Heart right ventricle (tissue), 16 donors: ENCODE measurements at regions of chr1 and their contacts with region 1.

Region 1: DNA sequence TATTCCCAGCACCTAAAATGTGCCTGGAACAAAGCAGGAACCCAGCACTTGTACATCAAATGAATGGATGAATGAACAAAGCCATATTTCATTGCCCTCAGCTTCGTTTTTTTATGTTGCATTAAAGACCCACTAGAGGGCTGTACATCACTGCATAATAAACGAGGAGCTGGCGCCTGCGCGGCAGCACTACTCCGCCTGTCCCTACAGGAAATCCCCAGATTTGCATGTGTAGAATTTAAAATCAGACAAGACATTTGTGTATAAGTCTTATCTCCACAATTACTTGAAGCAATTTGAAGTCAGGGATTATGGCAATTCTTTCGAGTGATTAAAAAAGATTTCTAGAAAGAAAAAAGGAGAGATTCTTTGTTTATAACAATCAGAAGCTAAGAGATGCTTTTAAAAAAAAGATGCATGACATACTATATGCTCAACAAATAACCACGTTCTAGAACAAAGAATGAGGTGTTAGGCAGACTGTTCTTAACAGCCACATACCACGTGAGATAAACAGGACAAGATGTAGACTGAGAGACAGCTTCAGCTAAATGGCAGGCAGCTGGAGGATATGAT is 5.4 kb upstream of the NEK2 start:
- DNase-seq: peak; percentile 52
- ATAC-seq: peak; percentile 69 to 92 (median 89)
- H3K4me3 ChIP-seq: no peak overlapping the region
- H3K27ac ChIP-seq: no peak overlapping the region
- H3K4me1 ChIP-seq: peaks cover 0 to 10% (median 2%) of the 10 kb centered on the region in 9 donors
- H3K27me3 ChIP-seq: no peaks in the 10 kb centered on the region
- CTCF ChIP-seq: peak; percentile 41 to 78 (median 75)

Region 2: GRCh38 chr1:211885747-211886522 is 205.1 kb after region 1 on chr1:
- intact Hi-C with region 1: no loop called
- DNase-seq: no peak
- ATAC-seq: peak in 1 of 8 donors; percentile 41
- H3K4me3 ChIP-seq: no peak overlapping the region
- H3K27ac ChIP-seq: no peak overlapping the region
- H3K4me1 ChIP-seq: no peaks in the 10 kb centered on the region
- H3K27me3 ChIP-seq: peaks cover 0 to 7% (median 0%) of the 10 kb centered on the region in 7 donors
- CTCF ChIP-seq: no peak

Region 3: GRCh38 chr1:211975152-211975941 is 294.5 kb after region 1 on chr1:
- intact Hi-C with region 1: no loop called
- DNase-seq: no peak
- ATAC-seq: peak in 3 of 8 donors; percentile 9 to 55 (median 34)
- H3K4me3 ChIP-seq: no peak overlapping the region
- H3K27ac ChIP-seq: peak overlapping the region in 4 of 10 donors; percentile 8 to 29 (median 28)
- H3K4me1 ChIP-seq: peaks cover 0 to 17% (median 0%) of the 10 kb centered on the region in 9 donors
- H3K27me3 ChIP-seq: no peaks in the 10 kb centered on the region
- CTCF ChIP-seq: no peak

Region 4: GRCh38 chr1:212021563-212021962 is 340.7 kb after region 1 on chr1:
- intact Hi-C with region 1: loop called in 2 of 10 experiments (anchors 10 kb)
- DNase-seq: no peak
- ATAC-seq: no peak
- H3K4me3 ChIP-seq: no peak overlapping the region
- H3K27ac ChIP-seq: no peak overlapping the region
- H3K4me1 ChIP-seq: no peaks in the 10 kb centered on the region
- H3K27me3 ChIP-seq: no peaks in the 10 kb centered on the region
- CTCF ChIP-seq: no peak